ENCODE measurements at regions of chr6 and their contacts with region 1.

Region 1: GRCh38 chr6:88013554-88013953 is 34.1 kb upstream of the SPACA1 start:
- H3K4me3 ChIP-seq: no peak overlapping the region
- H3K27ac ChIP-seq: no peak overlapping the region
- H3K4me1 ChIP-seq: no peaks in the 10 kb centered on the region
- CTCF ChIP-seq: no peak

Region 2: GRCh38 chr6:87968435-87969278 is 44.9 kb before region 1 on chr6:
- CTCF ChIA-PET with region 1: no interaction called
- POLR2A ChIA-PET with region 1: no interaction called
- H3K4me3 ChIP-seq: peak overlapping the region; percentile 37
- H3K27ac ChIP-seq: no peak overlapping the region
- H3K4me1 ChIP-seq: peaks cover 4% of the 10 kb centered on the region; the same call in 1 of the 2 replicates
- CTCF ChIP-seq: peak; percentile 68

Region 3: DNA sequence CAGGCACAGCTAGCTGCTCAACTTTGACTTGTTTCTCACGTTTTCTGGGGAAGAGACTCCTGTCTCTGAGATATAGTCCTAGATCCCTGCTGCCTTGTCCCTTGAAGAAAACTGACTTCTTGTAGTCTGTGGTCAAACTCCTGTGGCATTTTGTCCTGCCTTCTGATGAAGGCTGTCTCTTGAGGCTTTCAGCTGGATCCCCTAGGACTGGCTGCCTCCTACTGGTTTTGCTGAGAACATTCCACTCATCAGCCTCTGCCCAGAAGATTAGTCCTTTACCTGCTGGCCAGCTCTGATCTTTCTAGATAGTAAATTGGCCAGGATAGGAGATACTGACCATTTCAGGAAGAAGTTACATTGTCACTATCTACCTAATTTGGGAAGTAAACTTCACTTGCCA is 224.5 kb after region 1 on chr6:
- CTCF ChIA-PET with region 1: interaction called, 11 read pairs
- POLR2A ChIA-PET with region 1: no interaction called
- H3K4me3 ChIP-seq: no peak overlapping the region
- H3K27ac ChIP-seq: no peak overlapping the region
- H3K4me1 ChIP-seq: no peaks in the 10 kb centered on the region
- CTCF ChIP-seq: no peak

Region 4: GRCh38 chr6:88290411-88290810 is 276.9 kb after region 1 on chr6:
- CTCF ChIA-PET with region 1: no interaction called
- POLR2A ChIA-PET with region 1: no interaction called
- H3K4me3 ChIP-seq: no peak overlapping the region
- H3K27ac ChIP-seq: no peak overlapping the region
- H3K4me1 ChIP-seq: no peaks in the 10 kb centered on the region
- CTCF ChIP-seq: no peak

Measured in HEK293 (cell line).